Transverse colon (tissue), 4 donors: ENCODE measurements at regions of chr12 and their contacts with region 1.

Region 1: GRCh38 chr12:89451841-89452251 is 72.8 kb downstream of the GALNT4 start:
- DNase-seq: peak; percentile 25
- H3K4me3 ChIP-seq: no peak overlapping the region
- H3K27ac ChIP-seq: peak overlapping the region; percentile 66 to 82 (median 78)
- H3K4me1 ChIP-seq: peaks cover 0 to 40% (median 13%) of the 10 kb centered on the region in 4 donors
- H3K27me3 ChIP-seq: no peaks in the 10 kb centered on the region
- CTCF ChIP-seq: no peak
- EP300 ChIP-seq: no peak
- POLR2A ChIP-seq: no peak

Region 2: GRCh38 chr12:89019408-89020120 is 432.3 kb before region 1 on chr12:
- in situ Hi-C with region 1: loop called in 2 of 4 experiments (anchors 10 to 25 kb)
- intact Hi-C with region 1: no loop called
- DNase-seq: peak; percentile 86
- H3K4me3 ChIP-seq: no peak overlapping the region
- H3K27ac ChIP-seq: no peak overlapping the region
- H3K4me1 ChIP-seq: peaks cover 0 to 15% (median 4%) of the 10 kb centered on the region in 4 donors
- H3K27me3 ChIP-seq: no peaks in the 10 kb centered on the region
- CTCF ChIP-seq: peak; percentile 76 to 86 (median 81)
- EP300 ChIP-seq: no peak
- POLR2A ChIP-seq: no peak

Region 3: DNA sequence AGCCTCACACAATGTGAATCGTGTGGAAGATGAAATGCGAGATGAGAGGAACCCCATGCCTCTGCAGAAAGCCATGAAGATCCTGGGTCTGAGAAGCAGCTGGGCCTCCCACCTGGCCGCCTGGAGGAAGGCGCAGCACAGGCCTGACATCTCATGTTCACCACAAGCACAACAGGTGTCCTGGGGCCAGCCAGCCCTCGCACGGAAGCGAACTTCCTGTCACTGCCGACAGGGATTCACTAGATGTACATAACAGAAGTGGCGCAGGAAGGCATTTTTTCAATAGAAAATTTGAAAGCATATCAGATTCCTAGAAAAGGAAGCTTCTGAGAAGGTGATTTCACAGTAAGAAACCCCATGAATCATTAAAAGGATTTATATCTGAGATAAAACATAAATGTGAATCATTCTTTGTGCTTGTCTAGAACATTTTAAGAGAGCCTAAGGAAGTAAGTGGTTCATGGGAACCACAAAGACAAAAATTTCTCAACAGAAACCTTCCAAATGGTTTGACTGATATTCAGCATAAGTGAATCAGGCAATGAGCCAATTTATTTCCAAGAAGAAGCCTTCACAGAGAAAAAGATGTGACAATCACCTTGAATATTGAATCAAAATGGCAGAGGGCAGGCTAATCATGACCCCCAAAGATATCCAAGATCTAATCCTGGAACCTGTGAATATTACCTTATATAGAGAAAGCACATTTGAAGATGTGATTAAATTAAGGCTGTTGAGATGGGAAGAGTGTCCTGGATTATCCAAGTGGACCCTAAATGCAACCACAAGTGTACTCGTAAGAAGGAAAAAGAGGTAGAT is 411.5 kb before region 1 on chr12:
- in situ Hi-C with region 1: loop called in 1 of 4 experiments (anchors 10 kb)
- intact Hi-C with region 1: no loop called
- DNase-seq: peak; percentile 61
- H3K4me3 ChIP-seq: no peak overlapping the region
- H3K27ac ChIP-seq: no peak overlapping the region
- H3K4me1 ChIP-seq: no peaks in the 10 kb centered on the region
- H3K27me3 ChIP-seq: no peaks in the 10 kb centered on the region
- CTCF ChIP-seq: no peak
- EP300 ChIP-seq: no peak
- POLR2A ChIP-seq: no peak

Region 4: GRCh38 chr12:89051065-89051677 is 400.7 kb before region 1 on chr12:
- in situ Hi-C with region 1: loop called in 2 of 4 experiments (anchors 10 kb)
- intact Hi-C with region 1: no loop called
- DNase-seq: no peak
- H3K4me3 ChIP-seq: no peak overlapping the region
- H3K27ac ChIP-seq: no peak overlapping the region
- H3K4me1 ChIP-seq: no peaks in the 10 kb centered on the region
- H3K27me3 ChIP-seq: no peaks in the 10 kb centered on the region
- CTCF ChIP-seq: peak; percentile 88 to 94 (median 90)
- EP300 ChIP-seq: no peak
- POLR2A ChIP-seq: no peak

Region 5: DNA sequence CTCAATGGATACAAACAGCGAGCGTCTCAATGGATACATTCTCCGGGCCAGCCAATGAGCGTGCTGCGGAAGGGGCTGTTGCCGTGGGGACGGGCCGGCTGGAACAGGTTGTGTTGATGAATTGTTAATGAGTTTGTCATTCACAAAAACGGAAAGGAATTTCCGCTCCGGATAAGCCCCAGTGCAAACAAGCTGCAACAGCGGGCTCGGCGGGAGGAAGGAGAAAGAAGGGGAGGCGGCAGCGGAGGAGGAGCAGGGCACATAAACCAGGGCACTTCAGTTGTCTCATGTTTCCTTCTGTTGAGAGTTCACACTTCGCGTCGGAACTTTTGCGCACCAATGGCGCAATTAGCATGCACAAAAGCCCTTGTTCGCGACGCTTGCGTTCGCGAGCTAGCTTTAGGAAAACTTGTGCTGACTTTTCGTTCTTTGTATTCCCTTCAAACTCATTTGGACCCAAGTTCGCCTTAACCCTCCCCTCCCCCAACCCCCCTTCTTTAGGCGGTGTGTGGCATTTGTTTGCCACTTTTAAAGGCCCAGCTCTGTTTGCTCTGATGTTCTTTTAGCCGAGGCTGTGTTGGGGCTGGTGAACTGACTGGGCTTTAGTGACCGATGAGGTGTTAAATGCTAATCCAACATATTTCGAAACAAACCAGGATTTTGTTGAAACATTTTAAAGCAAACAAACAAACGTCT is 99.2 kb before region 1 on chr12 and contains the start of gene DUSP6:
- in situ Hi-C with region 1: loop called in 2 of 4 experiments (anchors 5 to 10 kb)
- intact Hi-C with region 1: no loop called
- DNase-seq: peak; percentile 97
- H3K4me3 ChIP-seq: peak within 1 kb of the TSS; percentile 61 to 71 (median 67)
- H3K27ac ChIP-seq: peak within 1 kb of the TSS; percentile 96 to 98 (median 98)
- H3K4me1 ChIP-seq: peaks cover 8 to 60% (median 21%) of the 10 kb centered on the region in 4 donors
- H3K27me3 ChIP-seq: no peaks in the 10 kb centered on the region
- CTCF ChIP-seq: no peak
- EP300 ChIP-seq: peak; percentile 6
- POLR2A ChIP-seq: peak; percentile 86
- total RNA-seq, gene DUSP6: 22.9 to 83.4 (median 53.2) TPM

Region 6: GRCh38 chr12:89421092-89421835 is 30.6 kb before region 1 on chr12:
- in situ Hi-C with region 1: no loop called
- intact Hi-C with region 1: loop called (anchors 1 kb)
- DNase-seq: no peak
- H3K4me3 ChIP-seq: no peak overlapping the region
- H3K27ac ChIP-seq: no peak overlapping the region
- H3K4me1 ChIP-seq: peaks cover 0 to 7% (median 0%) of the 10 kb centered on the region in 4 donors
- H3K27me3 ChIP-seq: no peaks in the 10 kb centered on the region
- CTCF ChIP-seq: peak in 1 of 5 experiments; percentile 23
- EP300 ChIP-seq: no peak
- POLR2A ChIP-seq: no peak